Mammary epithelial cell (primary cell): ENCODE measurements at regions of chr19 and their contacts with region 1.

Region 1: GRCh38 chr19:45792470-45793177 is at the start of gene DMWD:
- DNase-seq: peak; percentile 97
- H3K4me3 ChIP-seq: peak within 1 kb of the TSS; percentile 47 to 94 (median 83)
- H3K27ac ChIP-seq: peak within 1 kb of the TSS; percentile 67
- H3K4me1 ChIP-seq: peaks cover 12% of the 10 kb centered on the region
- H3K27me3 ChIP-seq: no peaks in the 10 kb centered on the region
- CTCF ChIP-seq: no peak
- total RNA-seq, gene DMWD: 40.0 to 56.7 TPM

Region 2: GRCh38 chr19:45746866-45747265 is 45.8 kb before region 1 on chr19:
- CTCF ChIA-PET with region 1: no interaction called
- dilution Hi-C with region 1: no loop called
- in situ Hi-C with region 1: no loop called
- intact Hi-C with region 1: no loop called
- DNase-seq: no peak
- H3K4me3 ChIP-seq: no peak overlapping the region
- H3K27ac ChIP-seq: no peak overlapping the region
- H3K4me1 ChIP-seq: no peaks in the 10 kb centered on the region
- H3K27me3 ChIP-seq: no peaks in the 10 kb centered on the region
- CTCF ChIP-seq: no peak

Region 3: GRCh38 chr19:45779231-45780145 is 13.1 kb before region 1 on chr19:
- CTCF ChIA-PET with region 1: interaction called, 3 read pairs
- dilution Hi-C with region 1: no loop called
- in situ Hi-C with region 1: no loop called
- intact Hi-C with region 1: loop called (anchors 1 kb)
- DNase-seq: peak; percentile 73
- H3K4me3 ChIP-seq: peak overlapping the region in 2 of 3 experiments; percentile 38 to 39
- H3K27ac ChIP-seq: no peak overlapping the region
- H3K4me1 ChIP-seq: peaks cover 41% of the 10 kb centered on the region
- H3K27me3 ChIP-seq: no peaks in the 10 kb centered on the region
- CTCF ChIP-seq: peak; percentile 45 to 78